H1 (cell line): ENCODE measurements at regions of chr1 and their contacts with region 1.

Region 1: GRCh38 chr1:31306278-31306677 is 9.4 kb downstream of the ZCCHC17 start:
- DNase-seq: no peak
- H3K4me3 ChIP-seq: no peak overlapping the region
- H3K27ac ChIP-seq: no peak overlapping the region
- H3K4me1 ChIP-seq: no peaks in the 10 kb centered on the region
- H3K27me3 ChIP-seq: no peaks in the 10 kb centered on the region
- CTCF ChIP-seq: no peak
- EP300 ChIP-seq: no peak
- POLR2A ChIP-seq: no peak
- RAD21 ChIP-seq: no peak

Region 2: GRCh38 chr1:31327381-31327780 is 21.1 kb after region 1 on chr1:
- CTCF ChIA-PET with region 1: interaction called, 7 read pairs
- POLR2A ChIA-PET with region 1: interaction called, 10 read pairs
- DNase-seq: no peak
- H3K4me3 ChIP-seq: no peak overlapping the region
- H3K27ac ChIP-seq: no peak overlapping the region
- H3K4me1 ChIP-seq: no peaks in the 10 kb centered on the region; a peak in 1 of 7 replicates
- H3K27me3 ChIP-seq: no peaks in the 10 kb centered on the region
- CTCF ChIP-seq: no peak
- EP300 ChIP-seq: no peak
- POLR2A ChIP-seq: no peak
- RAD21 ChIP-seq: no peak